ENCODE measurements at regions of chr9 and their contacts with region 1.

Region 1: DNA sequence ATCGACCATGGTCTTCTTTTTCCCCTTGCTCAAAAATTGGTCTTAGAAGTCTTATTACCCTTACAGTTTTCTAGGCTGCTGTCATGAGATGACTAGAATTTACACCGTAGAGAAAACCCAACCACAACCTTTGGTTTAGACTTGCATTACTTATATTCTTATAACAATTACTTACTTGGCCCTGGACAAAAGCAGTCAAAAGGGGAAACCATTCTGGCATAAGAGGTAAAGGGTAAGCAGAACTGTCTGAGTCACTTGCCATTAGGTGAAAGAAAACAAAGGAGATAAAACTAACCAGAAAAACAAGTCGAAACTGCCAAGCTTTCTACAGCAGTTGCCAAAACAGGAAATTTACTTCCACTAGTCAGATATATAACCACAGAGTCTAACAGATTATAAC is 17.9 kb downstream of the TMEM245 start:
- H3K4me3 Mint-ChIP-seq: no peak overlapping the region
- H3K27ac Mint-ChIP-seq: no peak overlapping the region
- H3K4me1 Mint-ChIP-seq: peaks cover 29% of the 10 kb centered on the region
- H3K27me3 Mint-ChIP-seq: no peaks in the 10 kb centered on the region

Region 2: DNA sequence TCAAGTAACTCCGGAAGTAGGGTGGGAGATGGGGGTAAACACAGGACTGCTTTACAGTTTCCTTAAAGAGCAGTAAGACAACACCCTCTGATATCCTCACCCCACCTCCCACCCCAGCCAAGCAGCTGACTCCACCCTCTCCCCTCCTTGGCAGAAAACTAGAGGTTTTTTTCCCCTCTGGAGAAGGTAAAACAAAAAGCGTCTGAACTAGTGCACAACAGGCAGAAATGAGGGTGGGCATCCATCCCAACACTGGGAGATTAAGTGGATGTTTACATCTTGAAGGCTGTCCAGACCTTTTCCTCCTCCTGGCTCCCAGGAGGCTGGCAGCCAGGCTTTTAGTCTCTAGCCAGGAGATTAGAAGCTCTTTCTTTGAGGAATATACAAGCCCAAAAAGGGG is 74.6 kb before region 1 on chr9:
- intact Hi-C with region 1: no loop called
- H3K4me3 Mint-ChIP-seq: no peak overlapping the region
- H3K27ac Mint-ChIP-seq: no peak overlapping the region
- H3K4me1 Mint-ChIP-seq: peaks cover 21% of the 10 kb centered on the region
- H3K27me3 Mint-ChIP-seq: no peaks in the 10 kb centered on the region

Region 3: DNA sequence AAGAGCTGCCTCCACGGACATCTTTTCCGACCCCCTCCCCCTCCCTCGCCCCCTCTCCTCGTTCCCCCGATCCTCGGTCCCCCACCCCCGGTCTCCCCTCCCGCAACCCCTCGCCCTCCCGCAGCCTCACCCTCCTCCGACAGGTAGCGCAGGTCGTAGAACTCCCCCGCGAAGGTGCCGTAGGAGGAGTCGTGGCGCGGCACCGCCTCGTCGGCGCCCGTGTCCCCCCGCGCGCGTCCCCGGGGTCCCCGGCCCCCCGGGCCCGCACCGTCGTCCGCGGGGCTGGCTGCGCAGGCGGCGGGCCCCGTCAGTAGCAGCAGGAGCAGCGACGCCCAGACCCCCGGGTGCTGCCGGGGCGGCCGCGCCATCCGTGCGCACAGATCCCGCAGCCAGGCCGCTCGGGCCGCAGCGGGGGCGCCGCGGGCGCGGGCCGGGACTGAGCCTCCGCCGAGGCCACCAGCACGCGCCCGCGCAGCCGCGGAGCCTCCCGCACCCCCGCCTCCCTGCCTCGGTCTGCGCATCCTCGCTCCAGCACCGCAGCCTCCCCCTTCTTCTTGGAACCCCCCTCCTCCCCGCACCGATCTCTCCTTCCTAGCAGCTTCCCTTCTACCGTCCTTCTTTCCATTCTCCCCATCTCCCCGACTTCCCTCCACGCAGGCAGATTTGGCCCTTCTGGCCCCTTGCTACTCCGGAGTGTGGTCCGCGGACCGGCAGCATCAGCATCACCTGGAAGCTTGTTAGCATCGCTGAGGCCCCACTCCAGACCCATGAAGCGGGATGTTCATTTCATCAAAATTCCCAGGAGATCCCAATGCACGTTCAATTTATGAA is 65.2 kb after region 1 on chr9 and contains the start of gene FRRS1L:
- intact Hi-C with region 1: loop called (anchors 10 kb)
- H3K4me3 Mint-ChIP-seq: no peak within 1 kb of the TSS
- H3K27ac Mint-ChIP-seq: no peak within 1 kb of the TSS
- H3K4me1 Mint-ChIP-seq: peaks cover 11% of the 10 kb centered on the region
- H3K27me3 Mint-ChIP-seq: peaks cover 61% of the 10 kb centered on the region